Activated CD4-positive, alpha-beta T cell treated with anti-CD3 and anti-CD28 coated beads for 36 hours (primary cell): ENCODE measurements at regions of chr4 and their contacts with region 1.

Region 1: DNA sequence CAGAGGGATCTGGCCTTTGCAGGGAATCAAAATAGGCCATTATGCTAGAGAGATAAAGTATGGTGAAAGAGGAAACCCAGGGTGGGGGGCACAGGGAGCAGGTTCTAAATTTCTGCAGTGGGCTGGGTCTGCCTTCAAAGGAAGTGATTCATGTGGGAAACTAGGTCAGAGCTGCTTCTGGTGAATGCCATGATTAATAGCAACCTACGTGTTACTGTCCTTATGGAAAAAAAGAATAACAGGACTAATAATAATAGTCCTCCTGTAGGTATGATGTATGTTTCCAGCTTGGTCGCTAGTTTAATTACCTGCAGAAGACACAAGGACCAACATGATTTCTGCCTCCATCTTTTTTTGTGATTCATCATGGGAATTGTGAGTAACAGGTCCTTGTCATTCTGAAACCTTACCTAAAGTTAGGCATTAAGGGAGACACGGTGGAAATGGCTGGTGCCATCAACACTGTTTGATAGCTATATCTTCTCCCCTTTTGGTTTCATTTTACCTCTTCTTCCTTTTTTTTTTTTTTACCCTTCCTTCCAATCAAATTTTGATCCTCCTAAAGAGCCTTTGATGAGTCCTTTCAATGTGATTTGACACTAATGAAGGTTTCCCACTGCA is 180.4 kb downstream of the CPEB2 start:
- DNase-seq: peak; percentile 54
- ATAC-seq: peak; percentile 94
- H3K4me3 Mint-ChIP-seq: peak overlapping the region; percentile 13
- H3K27ac Mint-ChIP-seq: peak overlapping the region; percentile 82
- H3K4me1 Mint-ChIP-seq: peaks cover 15% of the 10 kb centered on the region
- H3K27me3 Mint-ChIP-seq: no peaks in the 10 kb centered on the region

Region 2: GRCh38 chr4:14856076-14856933 is 326.4 kb before region 1 on chr4:
- CTCF ChIA-PET with region 1: no interaction called
- POLR2A ChIA-PET with region 1: no interaction called
- intact Hi-C with region 1: loop called (anchors 1 to 5 kb)
- DNase-seq: peak; percentile 86
- ATAC-seq: peak; percentile 94
- H3K4me3 Mint-ChIP-seq: peak overlapping the region; percentile 3
- H3K27ac Mint-ChIP-seq: peak overlapping the region; percentile 89
- H3K4me1 Mint-ChIP-seq: peaks cover 28% of the 10 kb centered on the region
- H3K27me3 Mint-ChIP-seq: peaks cover 19% of the 10 kb centered on the region

Region 3: DNA sequence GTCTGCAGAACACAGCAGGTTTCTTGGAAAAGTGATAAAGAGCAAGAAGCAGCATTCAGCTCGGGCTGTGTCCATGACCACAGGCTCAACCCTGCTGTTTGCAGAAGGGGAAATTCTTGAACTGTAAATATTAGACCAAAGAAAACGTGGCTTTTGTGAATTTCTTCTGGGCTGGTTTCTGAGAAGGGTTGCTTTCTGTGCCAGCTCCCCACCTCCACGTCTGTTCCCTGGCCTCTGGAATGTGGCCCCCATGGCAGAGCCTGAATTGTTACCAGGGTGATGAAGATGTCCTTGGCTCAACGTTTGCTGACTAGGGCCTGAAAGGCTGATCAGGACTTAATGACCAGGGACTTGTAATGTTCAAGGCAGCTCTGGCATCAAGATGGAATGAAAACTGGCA is 64.4 kb before region 1 on chr4:
- CTCF ChIA-PET with region 1: no interaction called
- POLR2A ChIA-PET with region 1: no interaction called
- intact Hi-C with region 1: loop called in 1 of 2 experiments (anchors 1 kb)
- DNase-seq: no peak
- ATAC-seq: no peak
- H3K4me3 Mint-ChIP-seq: no peak overlapping the region
- H3K27ac Mint-ChIP-seq: no peak overlapping the region
- H3K4me1 Mint-ChIP-seq: peaks cover 11% of the 10 kb centered on the region
- H3K27me3 Mint-ChIP-seq: peaks cover 25% of the 10 kb centered on the region